SK-N-SH (cell line): ENCODE measurements at regions of chr12 and their contacts with region 1.

Region 1: GRCh38 chr12:127381048-127381668 is 885.8 kb upstream of the TMEM132C start:
- DNase-seq: peak; percentile 88
- H3K4me3 ChIP-seq: peak overlapping the region; percentile 17 to 41; a peak in 3 of 4 replicates
- H3K27ac ChIP-seq: no peak overlapping the region
- H3K4me1 ChIP-seq: peaks cover 0 to 2% of the 10 kb centered on the region in 2 experiments; a peak in 1 of 4 replicates
- H3K27me3 ChIP-seq: no peaks in the 10 kb centered on the region
- CTCF ChIP-seq: peak; percentile 59
- EP300 ChIP-seq: no peak
- RAD21 ChIP-seq: peak; percentile 78

Region 2: DNA sequence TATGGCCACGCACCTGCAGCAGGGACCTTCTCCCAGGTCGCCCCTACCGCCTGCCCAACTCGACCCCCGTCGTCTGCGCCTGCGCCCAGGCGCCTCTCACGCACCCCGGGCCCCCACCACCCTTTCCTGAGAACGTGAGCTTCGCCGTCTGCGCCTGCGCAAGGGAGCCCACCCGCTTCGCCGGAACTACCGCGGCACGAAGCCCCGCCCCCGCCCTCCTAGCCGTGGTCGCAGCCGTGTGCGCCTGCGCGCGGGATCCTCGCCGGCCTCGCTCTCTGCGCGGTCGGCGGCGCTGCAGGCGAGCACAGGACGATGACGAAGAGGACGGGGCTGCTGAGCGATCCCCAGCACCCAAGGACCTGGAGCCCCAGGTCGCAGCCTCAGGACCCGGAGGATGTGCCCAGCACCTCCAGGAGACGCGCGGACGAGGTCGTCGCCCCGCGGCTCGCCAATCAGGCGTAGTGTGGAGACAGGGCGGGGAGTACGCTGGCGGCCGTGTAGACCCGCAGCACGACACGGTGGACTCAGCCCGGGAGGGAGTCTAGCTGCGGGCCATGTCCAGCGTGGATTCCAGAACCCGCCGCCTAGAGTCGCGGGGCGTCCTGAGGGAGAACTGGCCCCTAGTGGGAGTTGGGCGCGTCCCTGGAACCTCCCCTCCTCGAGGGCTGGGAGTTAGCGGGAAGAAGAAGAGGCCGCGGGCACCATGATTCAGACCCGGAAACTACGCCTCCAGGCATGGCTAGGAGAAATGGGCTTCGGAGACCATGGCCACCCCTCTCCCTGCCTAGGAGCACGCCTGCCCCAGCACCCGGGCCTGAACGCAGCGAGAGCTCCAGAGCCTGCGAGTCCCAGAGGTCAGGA is 235.0 kb before region 1 on chr12:
- CTCF ChIA-PET with region 1: no interaction called
- POLR2A ChIA-PET with region 1: no interaction called
- DNase-seq: peak; percentile 98
- H3K4me3 ChIP-seq: peak overlapping the region; percentile 55 to 59
- H3K27ac ChIP-seq: peak overlapping the region in 1 of 2 experiments; percentile 83; a peak in 1 of 4 replicates
- H3K4me1 ChIP-seq: peaks cover 0 to 3% of the 10 kb centered on the region in 2 experiments; a peak in 1 of 4 replicates
- H3K27me3 ChIP-seq: no peaks in the 10 kb centered on the region
- CTCF ChIP-seq: no peak
- EP300 ChIP-seq: no peak
- RAD21 ChIP-seq: no peak

Region 3: DNA sequence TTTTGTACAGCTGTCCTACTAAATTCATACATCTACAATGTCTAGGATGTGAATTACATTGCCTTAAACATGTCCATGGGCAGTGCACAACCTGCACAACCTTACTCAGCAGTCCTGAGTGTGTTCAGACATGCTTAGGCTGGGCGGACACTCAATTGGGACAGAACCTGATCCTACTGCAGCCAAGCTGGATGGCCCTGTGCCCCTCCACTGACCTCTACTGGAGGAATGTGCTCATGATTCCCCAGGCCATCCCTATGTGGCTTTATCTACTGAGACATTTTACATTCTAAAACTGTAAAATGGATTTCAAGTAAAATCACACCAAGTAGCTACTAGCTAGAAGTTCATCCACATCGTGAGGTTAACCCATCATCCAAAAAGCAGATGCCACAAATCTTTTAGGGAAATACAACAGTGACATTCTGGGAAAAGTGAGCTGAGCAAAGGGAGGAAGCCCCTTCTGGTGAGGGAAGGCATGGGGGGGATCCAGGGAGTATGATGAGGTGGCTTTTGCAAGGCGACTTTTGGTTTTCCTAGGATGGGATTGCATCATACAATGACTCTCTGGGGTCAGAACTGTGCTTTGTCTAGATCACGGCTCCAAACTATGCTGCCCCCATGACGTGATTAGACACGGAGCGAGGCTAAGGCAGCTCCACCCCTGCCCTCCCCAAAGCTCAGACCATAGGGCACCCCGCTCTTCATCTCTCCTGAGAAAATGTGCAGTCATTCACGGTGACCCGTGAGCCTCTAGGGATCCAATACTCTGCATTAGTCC is 25.9 kb before region 1 on chr12:
- CTCF ChIA-PET with region 1: interaction called, 15 read pairs
- POLR2A ChIA-PET with region 1: no interaction called
- DNase-seq: peak; percentile 32
- H3K4me3 ChIP-seq: no peak overlapping the region
- H3K27ac ChIP-seq: no peak overlapping the region
- H3K4me1 ChIP-seq: no peaks in the 10 kb centered on the region
- H3K27me3 ChIP-seq: no peaks in the 10 kb centered on the region
- CTCF ChIP-seq: 0 out of 2 replicates have a peak, but pooled peaks have one; percentile 26
- EP300 ChIP-seq: no peak
- RAD21 ChIP-seq: peak; percentile 28; the same call in 1 of the 2 replicates

Region 4: DNA sequence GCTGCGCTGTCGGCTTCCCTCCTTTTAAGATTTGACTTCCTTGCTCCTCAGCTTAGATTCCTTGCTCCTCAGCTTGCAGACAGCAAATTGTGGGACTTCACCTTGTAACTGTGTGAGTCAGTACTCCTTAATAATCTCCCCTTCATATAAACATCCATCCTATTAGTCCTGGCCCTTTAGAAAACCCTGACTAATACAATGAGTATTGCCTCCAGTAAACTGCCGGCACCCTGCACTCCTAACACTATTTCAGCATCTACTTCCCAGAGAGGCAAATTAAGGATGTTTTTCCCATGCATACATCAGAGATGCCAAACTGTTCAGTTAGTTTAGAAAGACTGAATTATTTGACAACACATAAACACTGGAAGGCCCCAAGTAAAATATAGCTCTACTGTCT is 274.5 kb after region 1 on chr12:
- CTCF ChIA-PET with region 1: no interaction called
- POLR2A ChIA-PET with region 1: no interaction called
- DNase-seq: no peak
- H3K4me3 ChIP-seq: no peak overlapping the region
- H3K27ac ChIP-seq: no peak overlapping the region
- H3K4me1 ChIP-seq: no peaks in the 10 kb centered on the region
- H3K27me3 ChIP-seq: no peaks in the 10 kb centered on the region
- CTCF ChIP-seq: no peak
- EP300 ChIP-seq: no peak
- RAD21 ChIP-seq: no peak